ENCODE measurements at regions of chr14 and their contacts with region 1.

Region 1: GRCh38 chr14:23320774-23321571 is at the start of gene PABPN1:
- DNase-seq: peak; percentile 99
- ATAC-seq: peak; percentile 95
- H3K4me3 ChIP-seq: peak within 1 kb of the TSS; percentile 99
- H3K27ac ChIP-seq: peak within 1 kb of the TSS; percentile 87
- H3K4me1 ChIP-seq: peaks cover 13% of the 10 kb centered on the region
- H3K27me3 ChIP-seq: no peaks in the 10 kb centered on the region
- CTCF ChIP-seq: no peak
- EP300 ChIP-seq: peak in 1 of 2 experiments; percentile 58; a peak in 1 of 4 replicates
- POLR2A ChIP-seq: peak; percentile 86
- RAD21 ChIP-seq: no peak
- polyA plus RNA-seq, gene PABPN1: 31.3 to 35.6 TPM

Region 2: GRCh38 chr14:23095196-23096108 is 225.5 kb before region 1 on chr14 and contains the start of gene C14orf119:
- CTCF ChIA-PET with region 1: interaction called, 14 read pairs
- POLR2A ChIA-PET with region 1: interaction called, 13 read pairs
- RAD21 ChIA-PET with region 1: interaction called, 6 read pairs
- SMC1A ChIA-PET with region 1: no interaction called
- in situ Hi-C with region 1: no loop called
- intact Hi-C with region 1: no loop called
- DNase-seq: peak; percentile 99
- ATAC-seq: peak; percentile 93
- H3K4me3 ChIP-seq: peak within 1 kb of the TSS; percentile 92
- H3K27ac ChIP-seq: peak within 1 kb of the TSS; percentile 99
- H3K4me1 ChIP-seq: peaks cover 3% of the 10 kb centered on the region; the same call in 1 of the 2 replicates
- H3K27me3 ChIP-seq: no peaks in the 10 kb centered on the region
- CTCF ChIP-seq: no peak
- EP300 ChIP-seq: no peak
- POLR2A ChIP-seq: peak; percentile 61; the same call in 1 of the 2 replicates
- RAD21 ChIP-seq: no peak
- polyA plus RNA-seq, gene C14orf119: 166 to 228 TPM

Region 3: DNA sequence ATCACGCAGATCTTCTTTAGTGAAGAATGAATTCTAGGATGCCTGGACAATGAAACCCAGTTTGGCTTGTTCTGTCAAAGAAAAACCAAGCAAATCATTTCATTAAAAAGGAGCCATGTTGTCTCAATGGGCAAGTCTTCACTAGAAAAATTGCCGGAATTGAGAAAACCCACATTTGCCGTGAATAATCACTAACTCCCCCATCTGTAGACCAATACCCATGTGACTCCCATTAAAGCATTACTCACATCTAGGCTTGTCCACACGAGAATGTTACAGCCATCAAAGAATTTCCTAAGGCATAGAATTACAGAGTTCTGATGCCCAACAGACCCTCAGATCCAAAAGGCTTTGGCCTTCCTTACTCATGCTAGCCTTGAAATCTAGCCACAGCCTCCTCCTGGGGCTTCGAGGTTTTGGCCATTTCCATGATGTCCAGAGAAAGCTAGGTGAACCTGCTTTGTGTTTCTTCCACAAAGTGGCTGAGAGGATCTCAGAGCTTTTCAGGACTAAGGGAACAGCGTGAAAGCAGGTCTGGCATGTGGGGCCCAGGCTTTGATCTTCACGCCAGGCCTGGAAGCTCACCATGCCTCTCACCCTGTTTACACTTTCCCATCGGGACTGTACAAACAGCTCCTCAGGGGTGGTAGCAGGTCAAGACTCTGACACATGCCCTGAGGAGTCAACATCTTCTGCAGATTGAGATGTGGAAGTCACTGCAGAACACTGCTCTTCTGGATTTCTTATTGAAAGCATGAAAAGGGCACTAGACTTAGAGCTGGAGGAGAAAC is 149.6 kb before region 1 on chr14:
- CTCF ChIA-PET with region 1: no interaction called
- POLR2A ChIA-PET with region 1: no interaction called
- RAD21 ChIA-PET with region 1: no interaction called
- SMC1A ChIA-PET with region 1: no interaction called
- in situ Hi-C with region 1: no loop called
- intact Hi-C with region 1: no loop called
- DNase-seq: no peak
- ATAC-seq: no peak
- H3K4me3 ChIP-seq: no peak overlapping the region
- H3K27ac ChIP-seq: no peak overlapping the region
- H3K4me1 ChIP-seq: no peaks in the 10 kb centered on the region
- H3K27me3 ChIP-seq: peaks cover 0 to 3% of the 10 kb centered on the region in 2 experiments; a peak in 2 of 4 replicates
- CTCF ChIP-seq: no peak
- EP300 ChIP-seq: no peak
- POLR2A ChIP-seq: no peak
- RAD21 ChIP-seq: no peak

Region 4: DNA sequence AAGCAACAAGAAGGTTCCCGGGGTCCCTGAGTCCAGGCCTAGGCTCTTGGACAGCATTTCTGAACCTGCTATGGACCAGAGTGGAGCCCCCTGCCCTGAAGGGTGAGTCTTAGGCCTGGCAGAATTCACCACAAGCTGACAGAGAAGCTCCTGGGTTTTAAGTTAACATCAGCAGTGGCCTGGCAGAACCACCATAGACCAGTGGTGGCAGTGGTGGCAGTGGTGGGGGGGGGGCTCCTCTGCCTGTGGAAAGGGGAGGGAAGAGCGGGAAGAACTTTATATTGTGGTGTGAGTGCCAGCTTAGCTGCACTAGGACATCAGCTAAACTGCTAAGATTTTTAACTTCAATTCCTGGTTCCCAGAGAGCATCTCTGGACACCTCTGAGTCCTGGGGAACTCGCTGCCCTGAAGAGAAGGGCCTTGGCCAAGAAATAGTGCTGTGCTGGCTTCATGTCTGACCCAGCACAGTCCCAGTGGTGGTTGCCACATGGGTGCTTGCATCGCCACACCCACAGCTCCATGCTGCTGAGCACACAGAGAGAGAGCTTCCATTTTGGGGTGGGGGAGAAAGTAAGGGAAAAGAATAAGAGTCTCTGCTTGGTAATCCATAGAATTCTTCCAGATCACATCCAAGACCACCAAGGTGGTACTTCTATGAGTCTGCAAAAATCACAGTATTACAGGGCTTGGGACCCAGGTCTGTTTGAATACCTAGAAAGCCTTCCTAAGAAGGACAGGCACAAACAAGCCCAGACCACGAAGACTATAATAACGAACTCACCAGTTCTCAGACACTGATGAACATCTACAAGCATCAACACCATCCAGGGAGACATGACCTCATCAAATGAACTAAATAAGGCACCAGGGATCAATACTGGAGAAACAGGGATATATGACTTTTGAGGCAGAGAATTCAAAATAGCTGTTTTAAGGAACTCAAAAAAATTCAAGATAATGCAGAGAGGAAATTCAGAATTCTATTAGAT is 103.6 kb before region 1 on chr14:
- CTCF ChIA-PET with region 1: no interaction called
- POLR2A ChIA-PET with region 1: no interaction called
- RAD21 ChIA-PET with region 1: no interaction called
- SMC1A ChIA-PET with region 1: no interaction called
- in situ Hi-C with region 1: no loop called
- intact Hi-C with region 1: no loop called
- DNase-seq: no peak
- ATAC-seq: no peak
- H3K4me3 ChIP-seq: no peak overlapping the region
- H3K27ac ChIP-seq: no peak overlapping the region
- H3K4me1 ChIP-seq: no peaks in the 10 kb centered on the region
- H3K27me3 ChIP-seq: no peaks in the 10 kb centered on the region
- CTCF ChIP-seq: no peak
- EP300 ChIP-seq: no peak
- POLR2A ChIP-seq: no peak
- RAD21 ChIP-seq: no peak

Region 5: GRCh38 chr14:23294734-23295561 is 26.0 kb before region 1 on chr14:
- CTCF ChIA-PET with region 1: interaction called, 77 read pairs
- POLR2A ChIA-PET with region 1: interaction called, 98 read pairs
- RAD21 ChIA-PET with region 1: interaction called, 103 read pairs
- SMC1A ChIA-PET with region 1: interaction called, 10 read pairs
- in situ Hi-C with region 1: no loop called
- intact Hi-C with region 1: no loop called
- DNase-seq: no peak
- ATAC-seq: peak; percentile 92
- H3K4me3 ChIP-seq: no peak overlapping the region
- H3K27ac ChIP-seq: no peak overlapping the region
- H3K4me1 ChIP-seq: 0 out of 2 replicates have a peak, but pooled peaks cover 4% of the 10 kb centered on the region
- H3K27me3 ChIP-seq: no peaks in the 10 kb centered on the region
- CTCF ChIP-seq: peak; percentile 68 to 85 (median 84)
- EP300 ChIP-seq: no peak
- POLR2A ChIP-seq: no peak
- RAD21 ChIP-seq: peak; percentile 52

Region 6: GRCh38 chr14:23306410-23307145 is 14.4 kb before region 1 on chr14 and contains the start of gene BCL2L2:
- CTCF ChIA-PET with region 1: interaction called, 77 read pairs
- POLR2A ChIA-PET with region 1: interaction called, 98 read pairs
- RAD21 ChIA-PET with region 1: interaction called, 103 read pairs
- SMC1A ChIA-PET with region 1: interaction called, 48 read pairs
- in situ Hi-C with region 1: no loop called
- intact Hi-C with region 1: loop called (anchors 1 kb)
- DNase-seq: no peak
- ATAC-seq: peak; percentile 65
- H3K4me3 ChIP-seq: peak within 1 kb of the TSS; percentile 100
- H3K27ac ChIP-seq: peak within 1 kb of the TSS; percentile 91
- H3K4me1 ChIP-seq: peaks cover 20% of the 10 kb centered on the region
- H3K27me3 ChIP-seq: no peaks in the 10 kb centered on the region
- CTCF ChIP-seq: no peak
- EP300 ChIP-seq: no peak
- POLR2A ChIP-seq: peak; percentile 91
- RAD21 ChIP-seq: no peak
- polyA plus RNA-seq, gene BCL2L2: 1.4 to 3.1 TPM

Region 7: GRCh38 chr14:23555882-23556699 is 235.1 kb after region 1 on chr14 and contains the start of gene THTPA:
- CTCF ChIA-PET with region 1: interaction called, 24 read pairs
- POLR2A ChIA-PET with region 1: interaction called, 4 read pairs
- RAD21 ChIA-PET with region 1: no interaction called
- SMC1A ChIA-PET with region 1: interaction called, 6 read pairs
- in situ Hi-C with region 1: loop called (anchors 5 kb)
- intact Hi-C with region 1: loop called (anchors 5 kb)
- DNase-seq: peak; percentile 72
- ATAC-seq: peak; percentile 85
- H3K4me3 ChIP-seq: peak within 1 kb of the TSS; percentile 82
- H3K27ac ChIP-seq: peak within 1 kb of the TSS; percentile 76
- H3K4me1 ChIP-seq: peaks cover 3% of the 10 kb centered on the region
- H3K27me3 ChIP-seq: no peaks in the 10 kb centered on the region
- CTCF ChIP-seq: no peak
- EP300 ChIP-seq: peak in 1 of 2 experiments; percentile 38; a peak in 2 of 4 replicates
- POLR2A ChIP-seq: peak; percentile 98
- RAD21 ChIP-seq: no peak
- polyA plus RNA-seq, gene THTPA: 3.1 to 5.9 TPM

Measured in GM12878 (cell line).